ENCODE measurements at regions of chr11 and their contacts with region 1.

Region 1: GRCh38 chr11:65888163-65888814 is at the start of gene FIBP:
- DNase-seq: peak; percentile 98
- ATAC-seq: peak; percentile 62
- H3K4me3 Mint-ChIP-seq: peak within 1 kb of the TSS; percentile 98
- H3K27ac Mint-ChIP-seq: peak within 1 kb of the TSS; percentile 96
- H3K4me1 Mint-ChIP-seq: peaks cover 70% of the 10 kb centered on the region
- H3K27me3 Mint-ChIP-seq: no peaks in the 10 kb centered on the region
- total RNA-seq, gene FIBP: 80.4 to 89.0 TPM

Region 2: DNA sequence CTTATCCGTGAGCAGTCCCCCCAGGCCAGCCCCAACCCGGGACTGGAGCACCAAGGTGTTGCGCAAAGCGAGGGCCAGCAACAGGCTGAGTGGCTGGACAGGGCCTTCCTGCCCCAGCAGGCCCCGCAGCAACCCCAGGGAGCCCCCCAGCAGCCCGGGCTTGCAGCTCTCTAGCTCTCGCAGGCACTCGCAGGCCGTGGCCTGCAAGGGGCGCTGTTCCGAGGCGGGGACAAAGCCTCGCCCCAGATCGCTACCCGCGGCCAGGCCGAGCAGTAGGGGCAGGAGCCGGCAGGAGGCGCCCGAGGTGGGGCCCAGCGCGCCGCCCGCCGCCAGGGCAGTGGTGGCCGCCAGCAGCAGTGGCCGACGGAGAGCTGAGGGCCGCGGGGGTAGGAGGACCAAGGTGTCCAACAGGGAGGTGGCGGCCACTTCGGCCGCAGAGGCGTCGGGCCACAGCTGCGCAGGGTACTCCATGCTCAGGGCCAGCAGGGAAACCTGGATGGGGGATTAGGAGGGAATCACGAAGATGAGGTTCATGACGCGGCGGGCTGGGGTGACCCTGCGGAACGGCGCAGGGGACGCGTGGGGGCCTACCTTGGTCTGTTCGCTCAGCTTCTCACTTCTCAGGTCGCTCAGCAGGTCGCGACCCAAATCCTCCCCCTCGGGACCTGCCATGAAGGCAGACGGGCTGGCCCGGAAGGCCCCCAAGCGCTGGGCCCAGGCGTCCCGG is 108.3 kb before region 1 on chr11:
- CTCF ChIA-PET with region 1: interaction called, 30 read pairs
- POLR2A ChIA-PET with region 1: interaction called, 7 read pairs
- DNase-seq: peak; percentile 89
- ATAC-seq: peak; percentile 80
- H3K4me3 Mint-ChIP-seq: peak overlapping the region; percentile 87
- H3K27ac Mint-ChIP-seq: peak overlapping the region; percentile 88
- H3K4me1 Mint-ChIP-seq: peaks cover 17% of the 10 kb centered on the region
- H3K27me3 Mint-ChIP-seq: peaks cover 8% of the 10 kb centered on the region

Region 3: DNA sequence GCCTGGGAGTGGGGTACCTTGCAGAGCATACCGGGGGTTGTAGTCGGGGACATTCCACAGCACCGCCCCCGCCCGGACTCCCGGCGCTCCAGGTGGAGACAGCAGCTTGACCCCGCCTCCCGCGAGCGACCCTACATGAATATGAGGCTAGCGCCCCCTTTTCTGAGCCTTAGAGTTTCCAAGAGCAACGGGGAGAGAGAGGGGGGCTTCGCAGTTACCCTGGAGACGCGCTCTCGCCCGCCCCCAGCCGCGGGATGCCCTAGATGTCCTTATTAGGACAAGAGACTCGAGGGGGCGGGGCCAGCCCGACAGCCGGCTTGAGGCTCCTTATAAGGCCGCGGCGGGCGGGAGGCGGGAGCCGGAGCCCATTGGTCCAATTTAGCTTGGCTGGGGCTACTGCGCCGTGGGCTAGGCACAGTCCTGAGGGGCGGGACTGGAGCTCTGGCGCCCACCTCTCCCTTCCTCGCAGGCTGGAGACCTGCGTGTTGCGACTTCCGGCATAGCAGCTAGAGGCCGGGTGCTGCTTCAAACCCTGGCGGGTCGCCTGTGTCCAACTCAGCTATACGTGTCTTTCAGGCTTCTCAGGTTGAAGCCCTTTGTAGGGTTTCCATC is 29.0 kb before region 1 on chr11:
- CTCF ChIA-PET with region 1: interaction called, 584 read pairs
- POLR2A ChIA-PET with region 1: interaction called, 305 read pairs
- DNase-seq: peak; percentile 100
- ATAC-seq: peak; percentile 72
- H3K4me3 Mint-ChIP-seq: peak overlapping the region; percentile 89
- H3K27ac Mint-ChIP-seq: peak overlapping the region; percentile 97
- H3K4me1 Mint-ChIP-seq: peaks cover 58% of the 10 kb centered on the region
- H3K27me3 Mint-ChIP-seq: no peaks in the 10 kb centered on the region

Region 4: GRCh38 chr11:65906602-65907001 is 18.3 kb after region 1 on chr11:
- CTCF ChIA-PET with region 1: interaction called, 55 read pairs
- POLR2A ChIA-PET with region 1: interaction called, 64 read pairs
- DNase-seq: no peak
- ATAC-seq: no peak
- H3K4me3 Mint-ChIP-seq: no peak overlapping the region
- H3K27ac Mint-ChIP-seq: no peak overlapping the region
- H3K4me1 Mint-ChIP-seq: peaks cover 23% of the 10 kb centered on the region
- H3K27me3 Mint-ChIP-seq: peaks cover 4% of the 10 kb centered on the region

Region 5: DNA sequence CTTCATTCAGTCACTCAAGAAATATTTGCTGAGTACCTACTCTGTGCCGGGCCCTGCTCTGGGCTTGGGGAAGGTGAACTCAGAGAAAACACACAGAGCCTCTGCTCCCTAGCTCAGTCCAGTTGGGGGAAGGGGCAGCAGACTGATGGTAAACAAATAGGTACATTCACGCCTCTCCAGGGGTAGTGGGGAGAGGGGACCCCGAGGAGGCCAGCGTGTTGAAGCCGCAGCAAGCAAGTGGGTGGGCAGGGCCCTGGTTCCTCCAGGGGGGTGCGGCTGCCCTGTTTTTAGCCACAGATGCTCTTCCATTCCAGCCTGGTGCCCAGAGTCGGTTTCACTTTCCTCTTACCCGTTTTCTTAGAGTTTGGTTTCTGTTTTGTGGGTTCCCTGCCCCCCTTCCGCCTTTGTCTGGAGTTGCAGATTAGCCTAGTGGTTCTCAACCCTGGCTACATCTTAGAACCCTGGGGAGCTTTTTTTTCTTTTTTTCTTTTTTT is 39.7 kb after region 1 on chr11:
- CTCF ChIA-PET with region 1: interaction called, 43 read pairs
- POLR2A ChIA-PET with region 1: interaction called, 24 read pairs
- DNase-seq: peak; percentile 93
- ATAC-seq: peak; percentile 89
- H3K4me3 Mint-ChIP-seq: peak overlapping the region; percentile 73
- H3K27ac Mint-ChIP-seq: peak overlapping the region; percentile 96
- H3K4me1 Mint-ChIP-seq: peaks cover 61% of the 10 kb centered on the region
- H3K27me3 Mint-ChIP-seq: no peaks in the 10 kb centered on the region

Region 6: DNA sequence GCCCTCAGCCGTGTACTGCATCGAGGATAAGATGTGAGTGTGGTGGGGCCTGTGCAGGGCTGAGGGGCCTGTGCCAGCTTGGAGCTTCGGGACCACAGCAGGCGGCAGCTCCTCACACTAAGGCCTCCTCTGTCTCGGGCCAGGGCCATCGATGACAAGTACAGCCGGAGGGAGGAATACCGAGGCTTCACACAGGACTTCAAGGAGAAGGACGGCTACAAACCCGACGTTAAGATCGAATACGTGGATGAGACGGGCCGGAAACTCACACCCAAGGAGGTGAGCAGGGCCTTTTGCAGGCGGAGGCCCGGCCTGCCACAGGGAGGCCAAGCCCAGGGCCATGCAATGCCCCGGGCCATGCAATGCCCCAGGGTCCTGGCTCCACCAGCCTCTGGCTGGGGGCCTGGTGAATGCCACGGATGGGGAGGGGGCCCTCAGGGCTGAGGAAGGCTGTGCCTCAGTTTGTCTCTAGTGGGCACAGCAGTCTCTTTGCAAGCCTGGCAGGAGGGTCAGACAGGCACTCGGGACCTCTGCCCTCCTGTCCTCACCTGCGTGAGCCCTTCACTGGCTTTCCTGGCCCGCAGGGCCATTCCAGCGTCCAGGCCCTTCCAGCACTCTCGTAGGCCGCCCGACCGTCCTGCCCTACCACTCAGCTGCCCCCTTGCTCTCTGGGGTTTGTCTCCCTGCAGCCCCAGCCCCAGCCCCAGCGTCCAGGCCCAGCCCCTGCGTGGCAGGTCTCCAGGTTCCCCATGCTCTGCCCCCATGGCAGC is 89.5 kb after region 1 on chr11:
- CTCF ChIA-PET with region 1: interaction called, 259 read pairs
- POLR2A ChIA-PET with region 1: interaction called, 3 read pairs
- DNase-seq: no peak
- ATAC-seq: no peak
- H3K4me3 Mint-ChIP-seq: no peak overlapping the region
- H3K27ac Mint-ChIP-seq: no peak overlapping the region
- H3K4me1 Mint-ChIP-seq: no peaks in the 10 kb centered on the region
- H3K27me3 Mint-ChIP-seq: no peaks in the 10 kb centered on the region

Region 7: GRCh38 chr11:66022401-66023185 is 134.3 kb after region 1 on chr11:
- CTCF ChIA-PET with region 1: interaction called, 13 read pairs
- POLR2A ChIA-PET with region 1: no interaction called
- DNase-seq: peak; percentile 84
- ATAC-seq: peak; percentile 93
- H3K4me3 Mint-ChIP-seq: peak overlapping the region; percentile 2
- H3K27ac Mint-ChIP-seq: no peak overlapping the region
- H3K4me1 Mint-ChIP-seq: peaks cover 22% of the 10 kb centered on the region
- H3K27me3 Mint-ChIP-seq: no peaks in the 10 kb centered on the region

Measured in activated CD8-positive, alpha-beta T cell treated with anti-CD3 and anti-CD28 coated beads, Interleukin-2, amount 10 ng/mL, durations not matched to agents 7 days and 5 days (primary cell).